ENCODE measurements at regions of chr2 and their contacts with region 1.

Region 1: DNA sequence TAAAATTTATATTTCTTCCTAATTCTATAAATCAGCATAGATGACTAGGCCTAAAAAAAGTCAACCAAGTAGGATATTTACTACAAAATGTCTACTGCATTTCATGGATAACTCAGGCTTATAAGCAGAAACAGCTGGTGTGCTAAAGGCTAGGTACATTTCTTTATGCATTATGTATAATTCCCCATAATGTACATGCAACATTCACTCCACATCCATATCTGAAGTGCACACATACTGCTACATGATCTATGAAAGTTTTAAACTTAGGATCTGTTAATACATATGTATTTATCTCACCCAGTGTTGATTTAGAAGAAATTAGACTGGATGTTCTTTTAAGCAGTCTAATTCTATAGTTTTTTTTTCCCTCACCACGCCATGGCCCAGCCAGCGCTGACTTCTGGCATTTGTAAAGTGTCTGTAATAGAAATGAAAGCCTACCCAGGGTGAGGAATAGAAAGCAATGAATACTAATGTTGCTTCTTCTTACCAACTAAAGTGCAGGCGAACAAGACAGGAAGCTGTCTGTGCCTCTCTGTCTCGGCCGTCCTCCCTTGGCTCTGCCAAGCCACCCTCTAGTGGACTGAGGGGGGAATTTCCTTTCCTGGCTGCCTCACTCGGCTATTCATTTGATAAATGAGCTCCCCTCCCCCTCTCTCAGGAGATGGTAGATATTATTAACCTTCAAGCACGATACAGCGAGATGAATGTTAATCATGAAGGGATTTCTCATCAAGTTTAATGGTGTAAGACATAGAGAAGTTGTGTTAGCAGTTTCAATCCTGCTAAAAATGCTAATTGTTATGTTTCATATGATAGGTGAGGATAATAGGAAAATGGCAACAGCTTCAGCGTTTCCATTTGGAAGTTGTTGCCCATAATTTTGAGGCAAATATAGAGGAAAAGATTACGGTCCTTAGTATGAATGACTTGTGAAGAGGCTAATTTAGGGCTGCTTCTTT is 384.5 kb downstream of the MTX2 start:
- DNase-seq: peak; percentile 64
- ATAC-seq: peak; percentile 71
- H3K4me3 Mint-ChIP-seq: no peak overlapping the region
- H3K27ac Mint-ChIP-seq: no peak overlapping the region
- H3K4me1 Mint-ChIP-seq: peaks cover 16% of the 10 kb centered on the region
- H3K27me3 Mint-ChIP-seq: peaks cover 31% of the 10 kb centered on the region
- CTCF ChIP-seq: peak; percentile 63

Region 2: DNA sequence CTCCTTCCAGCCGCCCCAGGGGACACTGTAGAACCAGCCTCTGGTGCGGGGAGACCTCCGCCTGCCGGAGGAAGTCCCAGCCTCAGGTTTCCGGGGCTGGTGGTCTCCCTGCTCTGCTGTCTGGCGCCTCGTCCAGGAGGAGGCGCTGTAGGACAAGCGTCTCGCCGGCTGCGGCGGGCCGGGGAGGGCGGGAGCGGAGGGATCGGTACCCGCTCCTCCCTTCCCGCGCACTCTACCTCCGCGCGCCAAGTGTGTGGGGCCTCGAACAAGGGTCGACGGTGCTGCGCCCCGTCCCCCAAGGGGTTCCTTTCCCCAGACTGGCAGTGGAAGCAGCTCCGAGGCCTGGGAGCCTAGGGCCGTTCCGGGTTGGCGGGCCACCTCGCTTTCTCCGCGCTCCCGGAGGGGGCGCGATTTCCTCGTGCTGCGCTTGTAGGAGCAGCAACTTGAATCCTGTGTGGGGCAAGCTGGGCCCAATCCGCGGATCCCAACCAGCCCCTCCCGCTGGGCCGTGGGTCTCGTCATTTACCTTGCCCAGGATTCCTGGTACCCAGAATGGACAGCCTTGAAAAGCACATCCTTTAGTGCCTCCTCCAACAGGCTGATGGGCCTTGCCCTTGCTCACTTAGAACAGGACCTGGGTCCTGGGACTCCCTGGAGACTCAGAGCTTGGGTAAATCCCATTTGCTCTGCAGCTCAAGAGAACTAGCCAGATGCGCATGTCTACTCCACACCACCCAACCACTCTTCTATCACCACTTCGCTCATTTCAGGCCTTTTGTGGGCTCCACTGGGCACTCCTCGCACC is 513.0 kb before region 1 on chr2:
- CTCF ChIA-PET with region 1: interaction called, 33 read pairs
- POLR2A ChIA-PET with region 1: interaction called, 3 read pairs
- intact Hi-C with region 1: loop called (anchors 5 kb)
- DNase-seq: peak; percentile 76
- ATAC-seq: peak; percentile 94
- H3K4me3 Mint-ChIP-seq: peak overlapping the region; percentile 56
- H3K27ac Mint-ChIP-seq: no peak overlapping the region
- H3K4me1 Mint-ChIP-seq: peaks cover 23% of the 10 kb centered on the region
- H3K27me3 Mint-ChIP-seq: peaks cover 68% of the 10 kb centered on the region
- CTCF ChIP-seq: peak; percentile 94

Region 3: GRCh38 chr2:176554101-176555048 is 99.4 kb before region 1 on chr2:
- CTCF ChIA-PET with region 1: interaction called, 13 read pairs
- POLR2A ChIA-PET with region 1: no interaction called
- intact Hi-C with region 1: no loop called
- DNase-seq: peak; percentile 49
- ATAC-seq: peak; percentile 65
- H3K4me3 Mint-ChIP-seq: peak overlapping the region; percentile 77
- H3K27ac Mint-ChIP-seq: peak overlapping the region; percentile 67
- H3K4me1 Mint-ChIP-seq: peaks cover 7% of the 10 kb centered on the region
- H3K27me3 Mint-ChIP-seq: peaks cover 46% of the 10 kb centered on the region
- CTCF ChIP-seq: peak; percentile 85

Region 4: GRCh38 chr2:176643646-176644045 is 10.1 kb before region 1 on chr2:
- CTCF ChIA-PET with region 1: interaction called, 61 read pairs
- POLR2A ChIA-PET with region 1: interaction called, 3 read pairs
- intact Hi-C with region 1: no loop called
- DNase-seq: no peak
- ATAC-seq: no peak
- H3K4me3 Mint-ChIP-seq: no peak overlapping the region
- H3K27ac Mint-ChIP-seq: no peak overlapping the region
- H3K4me1 Mint-ChIP-seq: no peaks in the 10 kb centered on the region
- H3K27me3 Mint-ChIP-seq: peaks cover 60% of the 10 kb centered on the region
- CTCF ChIP-seq: no peak

Region 5: GRCh38 chr2:176669398-176670174 is 15.8 kb after region 1 on chr2:
- CTCF ChIA-PET with region 1: interaction called, 51 read pairs
- POLR2A ChIA-PET with region 1: interaction called, 4 read pairs
- intact Hi-C with region 1: no loop called
- DNase-seq: no peak
- ATAC-seq: no peak
- H3K4me3 Mint-ChIP-seq: no peak overlapping the region
- H3K27ac Mint-ChIP-seq: no peak overlapping the region
- H3K4me1 Mint-ChIP-seq: no peaks in the 10 kb centered on the region
- H3K27me3 Mint-ChIP-seq: peaks cover 11% of the 10 kb centered on the region
- CTCF ChIP-seq: no peak

Region 6: DNA sequence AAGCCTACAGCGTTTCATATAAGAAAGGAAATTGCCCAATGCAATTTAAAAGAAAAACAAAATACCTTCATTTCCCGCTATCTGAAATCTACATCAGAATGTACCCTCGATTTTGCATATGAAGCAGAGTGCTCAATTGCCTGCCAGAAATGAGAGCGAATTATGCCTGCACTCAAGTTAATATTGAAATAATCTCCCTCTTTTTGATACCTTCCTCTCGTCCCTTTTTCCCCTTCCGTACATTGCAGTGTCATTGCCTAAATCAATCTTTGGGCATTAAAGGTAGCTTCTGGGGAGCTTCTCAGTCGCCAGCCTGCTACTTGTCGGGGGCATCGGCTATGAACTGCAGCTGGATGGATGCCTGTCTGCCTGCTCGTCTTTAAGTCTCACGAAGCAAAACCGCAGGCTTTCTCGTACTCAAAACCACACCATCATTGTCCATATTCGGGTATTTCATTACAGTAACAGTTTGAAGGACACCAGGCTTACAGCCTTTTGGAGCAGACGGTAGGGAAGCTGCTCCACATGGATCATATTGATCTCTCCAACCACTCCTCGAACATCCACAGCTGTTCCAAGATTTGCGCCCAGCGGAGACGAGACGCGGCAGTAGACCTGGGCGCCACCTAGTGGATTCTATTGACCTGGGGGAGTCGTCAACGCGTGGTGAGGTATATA is 494.9 kb after region 1 on chr2:
- CTCF ChIA-PET with region 1: interaction called, 23 read pairs
- POLR2A ChIA-PET with region 1: no interaction called
- intact Hi-C with region 1: no loop called
- DNase-seq: peak; percentile 86
- ATAC-seq: peak; percentile 89
- H3K4me3 Mint-ChIP-seq: peak overlapping the region; percentile 81
- H3K27ac Mint-ChIP-seq: no peak overlapping the region
- H3K4me1 Mint-ChIP-seq: peaks cover 5% of the 10 kb centered on the region
- H3K27me3 Mint-ChIP-seq: peaks cover 31% of the 10 kb centered on the region
- CTCF ChIP-seq: peak; percentile 98